GM18951 (cell line): ENCODE measurements at regions of chr2 and their contacts with region 1.

Region 1: GRCh38 chr2:38315707-38316333 is 61.3 kb downstream of the ATL2 start:
- POLR2A ChIP-seq: no peak

Region 2: GRCh38 chr2:38079116-38080052 is 236.4 kb before region 1 on chr2:
- in situ Hi-C with region 1: no loop called
- POLR2A ChIP-seq: no peak

Region 3: GRCh38 chr2:38499548-38500546 is 184.0 kb after region 1 on chr2:
- in situ Hi-C with region 1: loop called (anchors 5 kb)
- POLR2A ChIP-seq: no peak